ENCODE measurements at regions of chr18 and their contacts with region 1.

Region 1: DNA sequence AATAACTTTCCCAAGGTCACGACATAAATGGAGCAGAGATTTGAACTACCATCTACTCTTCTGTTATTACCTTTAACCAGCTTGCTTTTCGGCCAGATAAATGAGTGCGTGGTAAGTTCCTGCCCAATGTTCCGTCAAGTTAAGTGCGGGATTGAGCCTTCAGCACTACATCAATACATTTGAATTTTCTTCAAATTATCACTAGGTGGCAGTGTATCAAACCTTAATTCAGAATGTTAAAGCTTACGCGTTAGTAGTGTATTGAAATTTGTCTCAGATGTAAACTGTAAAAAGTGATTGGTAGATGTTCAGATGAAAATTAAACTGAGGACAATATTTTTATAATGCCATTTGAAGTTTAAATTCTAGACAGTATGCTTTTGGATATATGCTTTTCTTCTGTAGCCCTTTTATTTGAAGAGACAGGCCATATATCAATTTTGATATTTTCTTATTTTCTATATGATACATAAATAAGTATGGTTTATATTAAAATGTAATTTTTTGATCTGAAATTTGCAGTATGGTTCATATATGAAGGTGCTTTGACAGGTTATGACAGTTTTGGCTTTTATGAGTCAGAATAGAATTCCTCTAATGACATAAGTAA is 681.3 kb downstream of the ADCYAP1 start:
- DNase-seq: peak; percentile 13
- H3K4me3 ChIP-seq: no peak overlapping the region
- H3K27ac ChIP-seq: no peak overlapping the region
- H3K4me1 ChIP-seq: no peaks in the 10 kb centered on the region
- H3K27me3 ChIP-seq: no peaks in the 10 kb centered on the region
- CTCF ChIP-seq: peak; percentile 25 to 58

Region 2: DNA sequence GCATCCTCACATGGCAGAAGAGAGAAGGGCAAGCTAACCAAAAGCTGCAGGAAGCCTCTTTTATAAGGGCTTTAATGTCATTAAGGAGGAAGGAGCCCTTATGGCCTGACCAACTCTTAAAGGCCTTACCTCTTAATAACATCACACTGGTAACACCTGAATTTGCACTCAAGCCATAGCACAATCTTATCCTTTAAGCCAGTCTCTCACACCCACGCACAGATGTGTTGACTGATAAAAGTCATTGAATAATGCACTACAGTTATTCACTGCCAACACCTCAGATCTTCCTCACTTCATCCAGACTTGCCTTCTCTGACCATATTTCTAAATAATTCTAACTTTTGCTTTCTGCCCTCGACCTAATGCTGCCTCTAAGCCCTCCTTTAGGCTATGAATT is 164.5 kb before region 1 on chr18:
- CTCF ChIA-PET with region 1: no interaction called
- dilution Hi-C with region 1: no loop called
- in situ Hi-C with region 1: no loop called
- intact Hi-C with region 1: no loop called
- DNase-seq: no peak
- H3K4me3 ChIP-seq: no peak overlapping the region
- H3K27ac ChIP-seq: no peak overlapping the region
- H3K4me1 ChIP-seq: no peaks in the 10 kb centered on the region
- H3K27me3 ChIP-seq: no peaks in the 10 kb centered on the region
- CTCF ChIP-seq: no peak

Region 3: DNA sequence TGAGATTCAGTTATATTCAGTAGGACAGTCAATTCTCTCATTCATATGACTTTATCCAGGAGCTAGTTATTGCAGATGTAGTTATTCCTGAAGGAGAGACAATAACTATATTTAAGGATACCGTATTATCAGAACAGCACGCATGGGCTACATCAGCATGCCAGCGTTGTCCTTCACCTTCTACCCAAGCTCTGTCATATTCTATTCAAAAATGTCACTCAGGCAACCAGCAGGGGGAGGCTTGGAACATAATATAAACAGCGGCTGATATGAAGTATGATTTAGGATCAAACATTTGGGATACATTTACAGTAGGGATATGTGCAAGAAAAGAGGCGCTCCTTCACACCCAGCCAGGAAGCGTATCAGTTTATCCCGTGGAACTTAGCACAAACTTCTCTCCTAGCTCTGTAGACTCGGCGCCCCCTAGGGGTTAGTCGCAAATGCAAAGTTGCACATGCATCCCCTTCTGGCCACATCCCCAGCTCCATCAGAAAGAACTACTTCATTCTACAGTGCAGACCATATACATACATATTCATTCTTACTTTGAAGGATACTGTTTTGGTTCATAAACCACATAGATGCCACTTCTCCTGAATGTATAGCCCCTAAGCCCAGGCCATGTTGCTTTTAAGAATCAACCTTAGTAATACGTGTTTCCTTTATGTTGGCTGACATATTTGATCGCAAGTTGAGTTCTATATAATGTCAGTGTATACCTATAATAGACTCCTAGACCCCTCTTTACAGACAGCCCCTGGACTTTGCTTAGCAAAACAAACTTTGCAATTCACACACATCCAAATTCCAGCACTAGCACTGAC is 78.1 kb after region 1 on chr18:
- CTCF ChIA-PET with region 1: no interaction called
- dilution Hi-C with region 1: no loop called
- in situ Hi-C with region 1: no loop called
- intact Hi-C with region 1: loop called (anchors 5 kb)
- DNase-seq: peak; percentile 20
- H3K4me3 ChIP-seq: no peak overlapping the region
- H3K27ac ChIP-seq: no peak overlapping the region
- H3K4me1 ChIP-seq: no peaks in the 10 kb centered on the region
- H3K27me3 ChIP-seq: no peaks in the 10 kb centered on the region
- CTCF ChIP-seq: peak; percentile 53 to 65

Region 4: GRCh38 chr18:1680108-1680507 is 94.1 kb after region 1 on chr18:
- CTCF ChIA-PET with region 1: no interaction called
- dilution Hi-C with region 1: no loop called
- in situ Hi-C with region 1: no loop called
- intact Hi-C with region 1: no loop called
- DNase-seq: no peak
- H3K4me3 ChIP-seq: no peak overlapping the region
- H3K27ac ChIP-seq: no peak overlapping the region
- H3K4me1 ChIP-seq: no peaks in the 10 kb centered on the region
- H3K27me3 ChIP-seq: no peaks in the 10 kb centered on the region
- CTCF ChIP-seq: no peak

Region 5: DNA sequence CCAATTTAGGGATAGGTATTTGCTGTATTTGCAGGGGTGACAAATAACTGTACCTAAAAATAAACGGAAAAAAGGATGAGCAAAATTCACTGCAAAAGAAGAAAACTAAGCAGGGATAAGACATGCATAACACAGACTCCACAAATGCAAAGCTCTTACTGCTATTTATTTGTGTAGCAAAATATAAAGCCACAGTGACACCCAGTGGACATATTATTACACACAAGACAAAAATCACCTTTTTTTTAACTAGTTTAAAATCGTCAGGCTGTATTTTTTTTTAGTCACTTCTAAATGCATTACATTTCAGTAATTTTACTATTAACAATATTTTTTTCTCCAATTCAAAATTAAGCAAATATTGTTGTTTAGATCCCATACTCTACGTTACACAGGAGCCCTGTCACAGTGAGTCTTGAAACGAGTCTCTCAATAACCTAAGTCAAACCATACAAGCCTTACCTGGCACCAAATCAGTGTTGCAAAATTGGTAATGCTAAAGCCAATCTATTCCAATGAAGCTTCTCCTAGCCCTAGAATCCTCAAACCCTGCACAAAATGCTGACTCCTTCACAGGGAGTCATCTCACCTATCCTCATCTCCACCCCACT is 961.6 kb after region 1 on chr18:
- CTCF ChIA-PET with region 1: no interaction called
- dilution Hi-C with region 1: no loop called
- in situ Hi-C with region 1: no loop called
- intact Hi-C with region 1: loop called (anchors 10 kb)
- DNase-seq: peak; percentile 19
- H3K4me3 ChIP-seq: no peak overlapping the region
- H3K27ac ChIP-seq: no peak overlapping the region
- H3K4me1 ChIP-seq: no peaks in the 10 kb centered on the region
- H3K27me3 ChIP-seq: no peaks in the 10 kb centered on the region
- CTCF ChIP-seq: peak; percentile 39 to 42